Left ventricle myocardium superior (tissue), 1 donor: ENCODE measurements at regions of chr15 and their contacts with region 1.

Region 1: DNA sequence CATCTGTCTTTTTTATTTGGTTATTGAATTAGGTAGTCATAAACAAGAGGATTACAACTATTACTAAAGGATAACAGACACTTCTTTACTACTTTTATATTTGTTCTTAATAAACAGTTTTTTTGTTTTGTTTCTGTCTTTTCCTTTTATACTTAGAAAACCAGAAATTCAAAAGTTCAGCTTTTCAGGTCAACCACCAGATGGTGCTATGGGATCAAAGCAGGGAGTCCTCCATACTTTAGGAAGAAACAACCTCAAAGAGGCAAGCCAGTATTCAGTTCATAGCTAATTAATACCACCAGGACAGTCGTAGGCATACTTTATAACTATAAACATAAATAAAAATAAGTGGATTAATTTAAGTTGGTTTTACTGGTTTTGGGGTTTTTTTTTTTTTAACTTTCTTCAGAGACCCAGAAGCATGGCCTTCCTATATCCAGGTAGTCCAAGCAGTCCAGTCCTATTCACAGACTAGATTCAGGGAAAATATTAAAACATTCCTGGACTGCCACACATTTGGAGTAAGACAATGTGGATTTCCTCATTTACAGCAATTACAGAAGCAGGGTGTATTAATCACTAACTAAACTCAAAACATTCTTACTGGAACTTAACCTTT is 16.0 kb upstream of the EID1 start:
- DNase-seq: no peak
- ATAC-seq: peak; percentile 69

Region 2: GRCh38 chr15:49023354-49023753 is 161.4 kb after region 1 on chr15:
- intact Hi-C with region 1: no loop called
- DNase-seq: no peak
- ATAC-seq: no peak

Region 3: DNA sequence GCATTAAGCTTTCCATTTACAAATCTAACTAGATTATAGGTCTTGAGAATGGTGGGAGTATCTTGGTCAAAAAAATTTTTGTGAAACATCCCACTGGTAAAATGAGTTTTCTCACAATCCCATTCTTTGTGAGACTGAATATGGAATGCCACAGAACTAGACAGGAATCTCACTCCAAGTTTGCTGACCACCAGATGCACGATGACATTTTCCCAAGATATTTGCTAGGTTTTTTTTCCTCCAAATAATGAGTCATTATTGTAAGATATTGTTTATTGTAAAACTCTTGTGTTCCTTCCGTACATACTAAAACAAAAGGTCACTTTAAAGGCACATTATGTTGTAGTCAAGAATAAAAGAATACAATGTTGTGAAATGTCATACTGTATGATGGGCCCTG is 239.6 kb after region 1 on chr15:
- intact Hi-C with region 1: no loop called
- DNase-seq: no peak
- ATAC-seq: no peak

Region 4: DNA sequence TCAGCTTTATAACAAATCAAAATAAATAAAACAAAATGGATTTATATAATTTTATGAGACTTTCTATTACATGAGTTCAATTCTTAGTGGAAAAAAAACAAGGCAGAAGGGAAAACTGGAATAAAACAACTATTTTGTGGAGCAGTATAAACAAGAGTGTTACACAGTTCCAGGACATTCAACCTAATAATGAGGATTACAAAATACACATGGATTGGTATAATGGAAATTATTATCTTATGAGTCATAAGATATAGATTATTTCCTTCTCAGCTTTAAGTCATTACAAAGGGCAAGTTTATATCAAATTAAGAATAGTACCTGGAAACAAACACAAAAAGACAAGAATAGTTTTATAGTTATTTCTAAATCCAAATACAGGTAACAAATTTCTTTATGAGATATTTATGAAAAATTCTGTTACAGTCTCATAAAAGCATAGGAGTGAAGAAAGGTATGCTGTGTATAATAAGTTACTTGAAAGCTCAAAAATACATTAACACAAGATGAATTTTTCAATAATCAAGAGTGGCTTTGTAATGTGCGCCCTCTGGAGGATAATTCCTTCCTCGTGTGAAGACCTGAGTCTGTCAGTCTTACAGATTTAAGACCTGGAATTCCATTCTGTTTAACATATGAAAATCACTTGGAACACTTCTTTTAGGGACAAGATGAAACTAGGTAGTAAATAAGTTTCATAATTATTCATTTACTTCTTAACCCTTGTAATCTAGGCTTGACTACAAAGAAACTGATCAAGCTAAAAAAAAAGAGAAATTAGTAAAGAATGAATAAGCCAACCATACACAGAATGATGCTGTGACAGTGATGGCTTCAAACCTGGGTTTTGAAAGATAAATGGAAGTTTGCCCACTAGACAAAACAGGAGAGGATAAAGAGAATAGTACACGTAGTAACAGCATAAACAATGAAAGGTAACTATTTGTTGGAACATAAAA is 284.0 kb after region 1 on chr15:
- intact Hi-C with region 1: loop called (anchors 5 kb)
- DNase-seq: no peak
- ATAC-seq: peak; percentile 41

Region 5: GRCh38 chr15:49421991-49422390 is 560.1 kb after region 1 on chr15:
- intact Hi-C with region 1: loop called (anchors 5 kb)
- DNase-seq: peak; percentile 78
- ATAC-seq: peak; percentile 71

Region 6: GRCh38 chr15:49946692-49947091 is 1084.8 kb after region 1 on chr15:
- intact Hi-C with region 1: no loop called
- DNase-seq: no peak
- ATAC-seq: no peak

Region 7: DNA sequence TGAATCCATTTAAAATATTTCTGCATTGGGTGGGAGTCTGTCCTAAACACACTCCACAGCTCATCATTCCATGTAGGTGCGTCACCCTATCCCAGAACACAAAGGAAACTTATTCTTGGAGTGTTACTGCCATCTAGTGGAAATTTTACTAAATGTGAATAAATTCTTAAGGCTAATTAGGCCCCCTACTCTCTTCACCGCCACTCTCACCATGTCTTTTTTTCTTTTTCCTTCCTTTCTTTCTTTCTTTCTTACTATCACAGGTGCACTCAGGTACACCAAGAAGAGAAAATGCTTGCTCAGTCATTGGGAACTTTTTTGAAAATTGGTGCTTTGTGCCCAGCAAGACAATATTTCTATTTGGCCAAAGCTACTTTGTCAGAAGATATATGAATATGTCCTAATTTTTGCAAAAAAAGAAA is 1283.5 kb after region 1 on chr15:
- intact Hi-C with region 1: loop called (anchors 5 kb)
- DNase-seq: no peak
- ATAC-seq: peak; percentile 82